ENCODE measurements at regions of chr12 and their contacts with region 1.

Region 1: GRCh38 chr12:46268590-46269558 is at the start of gene SLC38A1:
- DNase-seq: peak; percentile 62
- ATAC-seq: peak; percentile 80
- H3K4me3 ChIP-seq: peak within 1 kb of the TSS; percentile 69 to 95
- H3K27ac ChIP-seq: peak within 1 kb of the TSS; percentile 76
- H3K4me1 ChIP-seq: peaks cover 25 to 47% of the 10 kb centered on the region in 2 experiments
- H3K27me3 ChIP-seq: no peaks in the 10 kb centered on the region
- CTCF ChIP-seq: no peak
- POLR2A ChIP-seq: peak; percentile 63
- RAD21 ChIP-seq: 0 out of 2 replicates have a peak, but pooled peaks have one; percentile 8
- total RNA-seq, gene SLC38A1: 155 TPM

Region 2: DNA sequence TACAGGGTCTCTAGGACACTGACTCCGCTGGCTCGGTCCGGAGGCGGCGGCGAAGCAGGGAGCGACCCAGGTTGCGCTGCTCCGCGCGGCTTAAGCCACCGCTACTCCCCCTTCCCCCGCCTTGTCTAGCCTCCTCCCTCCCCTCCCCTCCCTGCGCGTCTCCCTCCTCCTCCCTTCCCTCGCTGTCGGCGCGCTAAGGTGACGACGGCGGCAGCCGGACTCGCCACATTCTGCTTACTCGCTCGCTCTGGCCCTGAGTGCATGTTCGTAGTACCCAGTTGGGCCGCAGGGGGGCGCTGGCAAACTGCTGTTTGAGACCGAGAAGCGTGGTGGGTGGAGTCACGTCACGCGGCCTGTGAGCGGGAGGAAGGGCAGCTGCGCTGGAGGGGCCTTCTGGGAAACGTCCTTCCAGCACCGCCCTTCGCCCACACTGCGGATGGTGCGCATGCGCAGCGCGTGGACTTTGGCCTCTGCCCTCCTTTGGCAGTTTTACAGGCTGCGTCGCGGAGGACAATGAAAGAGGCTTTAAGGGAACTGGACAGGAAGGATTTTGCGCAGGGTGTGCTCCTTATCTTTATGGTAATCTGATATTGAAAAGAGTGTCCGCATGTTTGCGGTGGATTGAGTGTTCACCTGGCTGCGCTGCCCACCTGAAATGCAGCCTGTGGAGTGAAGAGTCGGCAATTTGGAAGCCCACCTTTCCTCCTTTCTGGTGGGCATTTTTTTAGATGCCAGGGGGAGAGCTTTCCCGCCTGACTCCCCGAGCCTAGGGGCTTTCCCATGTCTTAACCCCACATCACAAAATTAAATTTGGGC is 278.2 kb before region 1 on chr12 and contains the start of gene SCAF11:
- CTCF ChIA-PET with region 1: no interaction called
- POLR2A ChIA-PET with region 1: no interaction called
- RAD21 ChIA-PET with region 1: no interaction called
- intact Hi-C with region 1: loop called (anchors 2 kb)
- DNase-seq: peak; percentile 100
- ATAC-seq: peak; percentile 84
- H3K4me3 ChIP-seq: peak within 1 kb of the TSS; percentile 85 to 89
- H3K27ac ChIP-seq: peak within 1 kb of the TSS; percentile 98
- H3K4me1 ChIP-seq: peaks cover 13 to 22% of the 10 kb centered on the region in 2 experiments
- H3K27me3 ChIP-seq: no peaks in the 10 kb centered on the region
- CTCF ChIP-seq: peak; percentile 81 to 92 (median 91); a peak in 5 of 6 replicates
- POLR2A ChIP-seq: peak; percentile 74
- RAD21 ChIP-seq: peak; percentile 98
- total RNA-seq, gene SCAF11: 79.8 TPM